T-cell (primary cell): ENCODE measurements at regions of chr2 and their contacts with region 1.

Region 1: DNA sequence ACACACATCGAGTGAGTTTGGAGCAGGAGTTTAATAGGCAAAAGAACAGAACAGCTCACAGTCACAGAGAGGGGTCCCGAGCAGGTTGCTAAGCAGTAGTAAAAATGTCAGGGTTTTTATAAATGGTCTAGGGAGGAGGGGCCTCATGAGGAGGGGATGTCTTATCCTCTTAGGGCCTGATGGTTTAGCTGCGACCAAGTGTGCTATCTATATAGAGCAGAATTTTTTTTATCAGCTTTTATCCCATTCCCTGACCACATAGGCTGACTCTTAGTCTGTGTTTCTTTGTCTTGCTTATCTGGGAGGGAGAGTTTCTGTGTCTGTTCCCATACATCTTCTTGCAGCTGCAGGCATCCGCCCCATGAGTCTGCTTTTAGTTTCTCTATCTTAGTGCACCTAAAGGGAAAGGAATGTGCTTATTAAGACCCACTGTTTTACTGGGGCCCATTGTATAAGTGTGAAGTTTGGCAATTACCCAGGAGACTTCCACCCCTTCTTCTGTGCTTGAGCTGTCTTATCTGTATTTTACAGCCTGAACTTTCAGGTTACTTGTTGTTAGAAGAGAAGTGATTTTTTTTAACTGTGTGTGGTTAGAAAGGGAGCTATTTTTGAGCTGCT is 30.4 kb upstream of the GMCL1 start:
- DNase-seq: no peak
- ATAC-seq: peak in 2 of 4 experiments; percentile 40
- H3K4me3 ChIP-seq: peak overlapping the region in 1 of 2 donors; percentile 15
- H3K4me3 Mint-ChIP-seq: peak overlapping the region in 2 of 3 donors; percentile 25 to 28
- H3K27ac ChIP-seq: no peak overlapping the region
- H3K27ac Mint-ChIP-seq: peak overlapping the region in 1 of 2 donors; percentile 23
- H3K4me1 ChIP-seq: peaks cover 0 to 8% of the 10 kb centered on the region in 2 experiments
- H3K4me1 Mint-ChIP-seq: peaks cover 14 to 29% (median 29%) of the 10 kb centered on the region in 3 donors
- H3K27me3 ChIP-seq: no peaks in the 10 kb centered on the region
- H3K27me3 Mint-ChIP-seq: peaks cover 0 to 4% of the 10 kb centered on the region in 2 donors

Region 2: DNA sequence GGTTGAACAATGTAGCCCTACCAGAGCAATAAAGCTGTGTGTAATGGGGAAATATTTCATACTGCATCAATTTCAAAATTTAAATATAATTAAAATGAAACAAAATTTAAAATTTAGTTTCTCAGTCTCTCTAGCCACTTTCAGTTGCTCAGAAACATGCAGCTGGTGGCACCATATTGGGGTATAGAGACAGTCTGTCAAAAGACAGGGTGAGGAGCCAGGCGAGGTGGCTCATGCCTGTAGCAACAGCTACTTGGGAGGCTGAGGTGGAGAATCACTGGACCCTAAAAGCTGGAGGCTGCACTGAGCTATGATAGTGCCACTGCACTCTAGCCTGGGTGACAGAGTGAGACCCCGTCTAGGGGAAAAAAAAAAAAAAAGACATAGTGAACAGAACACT is 37.0 kb before region 1 on chr2:
- CTCF ChIA-PET with region 1: no interaction called
- POLR2A ChIA-PET with region 1: interaction called in 1 of 2 experiments, 12 read pairs
- DNase-seq: no peak
- ATAC-seq: no peak
- H3K4me3 ChIP-seq: no peak overlapping the region
- H3K4me3 Mint-ChIP-seq: no peak overlapping the region
- H3K27ac ChIP-seq: no peak overlapping the region
- H3K27ac Mint-ChIP-seq: no peak overlapping the region
- H3K4me1 ChIP-seq: peaks cover 3 to 4% of the 10 kb centered on the region in 2 experiments
- H3K4me1 Mint-ChIP-seq: peaks cover 8 to 30% (median 20%) of the 10 kb centered on the region in 3 donors
- H3K27me3 ChIP-seq: no peaks in the 10 kb centered on the region
- H3K27me3 Mint-ChIP-seq: no peaks in the 10 kb centered on the region

Region 3: DNA sequence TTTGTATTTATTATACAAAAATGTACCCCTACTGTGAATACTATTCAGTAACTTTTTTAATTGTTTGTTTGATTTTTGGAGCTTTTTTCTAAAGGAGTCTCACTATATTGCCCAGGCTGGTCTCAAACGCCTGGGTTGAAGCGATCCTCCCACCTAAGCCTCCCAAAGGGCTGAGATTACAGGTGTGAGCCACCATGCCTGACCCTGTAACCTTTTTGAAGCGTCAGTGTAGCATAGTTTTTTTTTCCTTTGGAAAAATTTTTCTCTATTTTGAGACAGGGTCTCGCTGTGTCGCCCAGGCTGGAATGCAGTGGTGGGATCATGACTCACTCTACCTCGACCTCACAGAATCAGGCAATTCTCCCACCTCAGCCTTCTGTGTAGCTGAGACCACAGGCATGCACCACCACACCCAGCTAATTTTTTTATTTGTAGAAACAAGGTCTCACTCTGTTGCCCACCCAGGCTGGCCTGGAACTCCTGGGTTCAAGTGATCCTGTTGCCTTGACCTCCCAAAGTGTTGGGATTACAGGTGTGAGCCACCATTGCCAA is 32.4 kb after region 1 on chr2:
- CTCF ChIA-PET with region 1: no interaction called
- POLR2A ChIA-PET with region 1: no interaction called
- DNase-seq: no peak
- ATAC-seq: no peak
- H3K4me3 ChIP-seq: peak overlapping the region in 1 of 2 donors; percentile 27
- H3K4me3 Mint-ChIP-seq: peak overlapping the region; percentile 43 to 95 (median 83)
- H3K27ac ChIP-seq: no peak overlapping the region
- H3K27ac Mint-ChIP-seq: no peak overlapping the region
- H3K4me1 ChIP-seq: peaks cover 15 to 33% of the 10 kb centered on the region in 2 experiments
- H3K4me1 Mint-ChIP-seq: peaks cover 72 to 75% (median 73%) of the 10 kb centered on the region in 3 donors
- H3K27me3 ChIP-seq: no peaks in the 10 kb centered on the region
- H3K27me3 Mint-ChIP-seq: no peaks in the 10 kb centered on the region

Region 4: GRCh38 chr2:69848201-69848770 is 49.3 kb after region 1 on chr2:
- CTCF ChIA-PET with region 1: no interaction called
- POLR2A ChIA-PET with region 1: no interaction called
- DNase-seq: no peak
- ATAC-seq: no peak
- H3K4me3 ChIP-seq: no peak overlapping the region
- H3K4me3 Mint-ChIP-seq: no peak overlapping the region
- H3K27ac ChIP-seq: no peak overlapping the region
- H3K27ac Mint-ChIP-seq: no peak overlapping the region
- H3K4me1 ChIP-seq: no peaks in the 10 kb centered on the region
- H3K4me1 Mint-ChIP-seq: no peaks in the 10 kb centered on the region
- H3K27me3 ChIP-seq: no peaks in the 10 kb centered on the region
- H3K27me3 Mint-ChIP-seq: no peaks in the 10 kb centered on the region

Region 5: GRCh38 chr2:69964353-69964841 is 165.4 kb after region 1 on chr2:
- CTCF ChIA-PET with region 1: no interaction called
- POLR2A ChIA-PET with region 1: no interaction called
- DNase-seq: no peak
- ATAC-seq: peak in 1 of 4 experiments; percentile 27
- H3K4me3 ChIP-seq: no peak overlapping the region
- H3K4me3 Mint-ChIP-seq: no peak overlapping the region
- H3K27ac ChIP-seq: no peak overlapping the region
- H3K27ac Mint-ChIP-seq: no peak overlapping the region
- H3K4me1 ChIP-seq: peaks cover 0 to 7% of the 10 kb centered on the region in 2 experiments
- H3K4me1 Mint-ChIP-seq: peaks cover 2 to 8% (median 4%) of the 10 kb centered on the region in 3 donors
- H3K27me3 ChIP-seq: peaks cover 0 to 7% of the 10 kb centered on the region in 2 experiments
- H3K27me3 Mint-ChIP-seq: peaks cover 0 to 2% of the 10 kb centered on the region in 2 donors

Region 6: DNA sequence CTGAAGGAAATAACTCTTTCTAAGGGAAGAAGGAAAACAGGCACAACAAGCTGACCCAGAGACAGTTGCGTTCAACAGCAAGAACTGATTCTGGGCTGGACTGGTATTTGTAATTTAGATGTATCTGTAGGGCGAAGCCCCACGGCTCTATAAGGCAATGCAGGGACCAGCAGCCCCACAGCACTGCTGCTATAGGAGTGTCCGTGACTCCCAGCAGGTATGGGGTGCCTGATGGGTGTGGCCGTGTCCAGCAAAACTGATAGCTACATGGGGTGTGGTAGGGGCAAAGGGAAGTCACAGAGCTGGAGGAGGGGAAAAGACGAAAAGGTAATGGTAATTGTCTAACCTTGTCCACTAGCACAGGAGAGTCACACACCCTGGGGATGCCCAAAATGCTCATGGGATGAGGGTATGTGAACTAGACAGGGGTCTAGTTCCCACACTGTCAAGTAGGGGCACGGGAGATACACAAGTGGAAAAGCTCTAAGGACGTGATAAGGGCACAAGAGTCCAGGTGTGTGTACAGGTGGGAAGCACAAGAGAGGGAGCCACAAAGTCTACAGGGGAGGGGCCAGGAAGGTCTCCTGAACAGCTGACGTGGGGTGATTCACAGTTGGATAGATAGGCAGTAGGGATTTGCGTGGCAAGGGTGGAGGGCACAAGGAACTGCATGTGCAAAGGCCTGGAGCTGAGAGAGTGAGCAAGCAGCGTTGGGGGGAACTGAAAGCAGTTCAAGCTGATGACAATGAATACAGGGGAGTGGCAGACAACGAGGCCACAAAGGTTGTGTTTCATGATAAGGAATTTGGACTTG is 211.0 kb after region 1 on chr2:
- CTCF ChIA-PET with region 1: no interaction called
- POLR2A ChIA-PET with region 1: no interaction called
- DNase-seq: peak in 1 of 35 experiments; percentile 21
- ATAC-seq: no peak
- H3K4me3 ChIP-seq: no peak overlapping the region
- H3K4me3 Mint-ChIP-seq: no peak overlapping the region
- H3K27ac ChIP-seq: no peak overlapping the region
- H3K27ac Mint-ChIP-seq: peak overlapping the region in 1 of 2 donors; percentile 18
- H3K4me1 ChIP-seq: no peaks in the 10 kb centered on the region
- H3K4me1 Mint-ChIP-seq: peaks cover 4 to 12% (median 11%) of the 10 kb centered on the region in 3 donors
- H3K27me3 ChIP-seq: no peaks in the 10 kb centered on the region
- H3K27me3 Mint-ChIP-seq: no peaks in the 10 kb centered on the region